ENCODE measurements at regions of chr5 and their contacts with region 1.

Region 1: DNA sequence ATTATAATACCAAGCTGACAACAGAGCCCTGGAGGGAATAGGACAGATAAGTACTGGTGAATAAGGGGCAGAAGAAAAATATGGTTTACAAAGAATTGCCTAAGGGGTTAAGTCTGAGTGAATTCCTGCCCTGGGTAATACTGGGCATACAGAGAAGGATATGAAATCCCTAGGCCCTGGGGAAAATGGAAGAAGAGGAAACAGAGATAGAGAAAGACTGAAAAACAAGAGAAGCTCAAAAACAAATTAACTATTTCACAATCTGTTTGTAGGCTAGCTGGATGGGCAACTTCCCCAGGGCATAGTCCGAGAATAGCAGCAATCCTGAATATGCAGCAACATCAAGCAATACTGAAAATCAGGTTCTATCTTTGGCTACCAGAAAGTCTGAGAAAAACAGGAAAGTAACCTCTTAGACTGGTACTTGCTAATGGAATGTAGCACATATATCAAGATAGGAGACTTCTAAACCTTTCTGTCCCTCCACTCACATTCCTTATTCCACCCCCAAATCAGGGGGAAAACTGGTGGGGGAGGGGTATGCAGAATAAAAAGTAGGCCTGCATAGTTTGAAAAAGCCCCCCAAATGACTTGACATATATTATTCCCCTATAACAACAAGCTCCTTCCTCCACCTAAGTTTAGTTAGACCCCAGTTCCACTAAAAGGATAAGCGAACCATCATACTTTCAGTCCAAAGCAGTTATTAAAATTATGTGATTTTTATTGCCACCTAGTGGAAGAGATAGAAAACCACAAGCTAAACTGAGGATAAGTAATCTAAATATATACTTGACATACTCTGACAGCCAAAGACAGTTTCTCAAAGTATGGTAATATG is 20.6 kb downstream of the SLC38A9 start:
- DNase-seq: no peak
- ATAC-seq: peak; percentile 53
- H3K4me3 Mint-ChIP-seq: no peak overlapping the region
- H3K27ac Mint-ChIP-seq: no peak overlapping the region
- H3K4me1 Mint-ChIP-seq: peaks cover 3% of the 10 kb centered on the region
- H3K27me3 Mint-ChIP-seq: no peaks in the 10 kb centered on the region

Region 2: DNA sequence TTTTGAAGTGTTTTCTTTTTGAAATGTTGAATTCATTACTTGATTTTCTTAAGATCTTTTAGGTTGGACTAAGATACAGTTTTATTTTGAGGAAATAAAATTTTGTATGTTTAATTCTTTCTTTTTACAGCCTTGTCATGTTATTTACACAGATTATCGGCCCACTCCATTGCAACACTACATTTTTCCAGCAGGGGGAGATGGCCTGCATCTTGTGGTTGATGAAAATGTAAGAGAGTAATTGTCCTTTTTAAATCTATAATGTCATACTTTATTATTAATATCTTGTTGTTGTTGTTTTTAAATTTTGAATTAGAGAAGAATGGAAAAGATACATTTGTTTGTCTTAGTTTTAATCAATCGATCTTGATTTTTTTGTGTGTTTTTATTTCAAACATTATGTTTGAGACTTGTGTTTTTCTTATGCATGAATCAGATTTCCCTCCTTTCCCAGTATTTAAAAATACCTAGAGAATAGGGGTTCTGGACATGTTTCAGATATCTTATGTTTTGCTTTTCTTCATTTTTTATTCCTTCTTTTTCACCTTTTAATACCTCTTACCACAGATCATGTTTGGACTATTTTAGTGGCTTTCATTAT is 347.0 kb before region 1 on chr5:
- CTCF ChIA-PET with region 1: interaction called, 23 read pairs
- POLR2A ChIA-PET with region 1: no interaction called
- DNase-seq: peak; percentile 78
- ATAC-seq: no peak
- H3K4me3 Mint-ChIP-seq: no peak overlapping the region
- H3K27ac Mint-ChIP-seq: no peak overlapping the region
- H3K4me1 Mint-ChIP-seq: peaks cover 2% of the 10 kb centered on the region
- H3K27me3 Mint-ChIP-seq: no peaks in the 10 kb centered on the region

Region 3: DNA sequence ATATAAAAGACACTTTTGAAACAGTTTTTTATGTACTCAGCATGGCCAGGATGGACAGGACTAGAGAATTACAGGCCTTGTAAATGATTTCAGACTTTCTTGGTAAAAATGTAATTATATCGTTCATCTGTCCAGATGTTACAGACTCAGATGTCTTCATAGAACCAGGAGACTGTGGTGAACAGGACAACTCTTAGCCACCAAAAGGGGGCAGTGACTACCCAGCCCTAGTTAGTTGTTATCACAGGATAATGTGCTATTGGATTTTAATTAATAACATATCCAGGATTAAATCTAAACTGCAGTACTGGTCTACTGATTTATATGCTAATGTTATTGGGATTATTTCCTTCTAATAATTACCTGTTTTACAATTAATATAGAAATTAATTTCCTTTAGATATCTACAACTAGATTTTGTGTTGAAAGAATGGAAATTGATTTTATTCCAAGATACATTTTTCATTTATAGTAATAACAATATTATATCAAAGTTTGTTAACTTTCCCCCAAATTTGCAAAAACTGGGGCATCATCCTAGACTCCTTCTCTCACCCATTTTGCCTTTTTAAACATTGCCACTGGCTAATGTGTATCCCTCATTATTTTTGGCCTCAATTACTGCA is 284.3 kb before region 1 on chr5:
- CTCF ChIA-PET with region 1: interaction called, 32 read pairs
- POLR2A ChIA-PET with region 1: no interaction called
- DNase-seq: peak; percentile 40
- ATAC-seq: peak; percentile 57
- H3K4me3 Mint-ChIP-seq: no peak overlapping the region
- H3K27ac Mint-ChIP-seq: no peak overlapping the region
- H3K4me1 Mint-ChIP-seq: peaks cover 4% of the 10 kb centered on the region
- H3K27me3 Mint-ChIP-seq: no peaks in the 10 kb centered on the region

Region 4: DNA sequence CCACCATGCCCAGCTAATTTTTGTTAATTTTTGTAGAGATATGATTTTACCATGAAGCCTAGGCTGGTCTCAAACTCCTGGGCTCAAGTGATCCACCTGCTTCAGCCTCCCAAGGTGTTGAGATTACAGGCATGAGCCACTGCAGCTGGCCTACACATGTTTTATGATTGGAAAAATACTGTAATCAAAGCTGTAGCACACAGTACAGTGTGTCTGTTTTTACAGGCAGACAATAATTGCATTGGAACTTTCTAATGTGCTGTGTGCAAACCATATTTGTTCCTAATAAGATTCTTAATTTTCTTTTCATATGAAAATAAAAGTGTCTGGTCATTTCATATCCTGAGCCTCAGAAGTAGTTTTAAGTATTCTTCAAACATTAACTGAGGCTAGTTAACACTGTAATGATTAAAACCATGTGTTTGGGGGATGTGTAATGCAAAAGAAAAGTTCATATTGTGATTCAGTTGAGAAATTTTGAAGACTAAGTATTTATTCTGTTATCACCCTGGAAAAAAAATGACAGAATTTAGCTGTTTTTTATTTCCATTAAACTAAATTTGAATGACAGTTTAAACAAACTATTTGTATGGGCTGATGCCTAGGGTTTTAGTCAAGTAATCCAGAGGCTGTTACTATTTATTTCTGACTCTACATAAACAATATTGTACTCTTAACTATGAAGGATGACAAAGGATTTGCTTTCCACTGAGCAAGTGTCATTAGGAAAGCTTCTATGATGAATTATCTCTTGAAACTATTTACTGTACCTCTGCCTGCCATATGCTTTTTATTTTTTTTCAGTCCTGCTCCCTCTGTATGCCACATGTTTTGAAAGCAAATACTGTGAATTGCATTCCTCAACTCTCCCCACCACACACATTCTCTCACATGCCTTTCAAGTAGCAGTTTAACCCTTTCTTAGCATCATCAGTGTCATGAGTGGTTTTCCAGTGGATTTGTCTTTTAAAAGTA is 272.2 kb before region 1 on chr5:
- CTCF ChIA-PET with region 1: interaction called, 13 read pairs
- POLR2A ChIA-PET with region 1: no interaction called
- DNase-seq: no peak
- ATAC-seq: no peak
- H3K4me3 Mint-ChIP-seq: no peak overlapping the region
- H3K27ac Mint-ChIP-seq: peak overlapping the region; percentile 25
- H3K4me1 Mint-ChIP-seq: peaks cover 25% of the 10 kb centered on the region
- H3K27me3 Mint-ChIP-seq: no peaks in the 10 kb centered on the region

Region 5: GRCh38 chr5:55620009-55620843 is 71.3 kb before region 1 on chr5:
- CTCF ChIA-PET with region 1: no interaction called
- POLR2A ChIA-PET with region 1: no interaction called
- DNase-seq: no peak
- ATAC-seq: no peak
- H3K4me3 Mint-ChIP-seq: no peak overlapping the region
- H3K27ac Mint-ChIP-seq: no peak overlapping the region
- H3K4me1 Mint-ChIP-seq: peaks cover 5% of the 10 kb centered on the region
- H3K27me3 Mint-ChIP-seq: no peaks in the 10 kb centered on the region

Region 6: GRCh38 chr5:55680353-55680752 is 11.1 kb before region 1 on chr5:
- CTCF ChIA-PET with region 1: interaction called, 10 read pairs
- POLR2A ChIA-PET with region 1: no interaction called
- DNase-seq: no peak
- ATAC-seq: no peak
- H3K4me3 Mint-ChIP-seq: no peak overlapping the region
- H3K27ac Mint-ChIP-seq: no peak overlapping the region
- H3K4me1 Mint-ChIP-seq: peaks cover 14% of the 10 kb centered on the region
- H3K27me3 Mint-ChIP-seq: no peaks in the 10 kb centered on the region

Region 7: DNA sequence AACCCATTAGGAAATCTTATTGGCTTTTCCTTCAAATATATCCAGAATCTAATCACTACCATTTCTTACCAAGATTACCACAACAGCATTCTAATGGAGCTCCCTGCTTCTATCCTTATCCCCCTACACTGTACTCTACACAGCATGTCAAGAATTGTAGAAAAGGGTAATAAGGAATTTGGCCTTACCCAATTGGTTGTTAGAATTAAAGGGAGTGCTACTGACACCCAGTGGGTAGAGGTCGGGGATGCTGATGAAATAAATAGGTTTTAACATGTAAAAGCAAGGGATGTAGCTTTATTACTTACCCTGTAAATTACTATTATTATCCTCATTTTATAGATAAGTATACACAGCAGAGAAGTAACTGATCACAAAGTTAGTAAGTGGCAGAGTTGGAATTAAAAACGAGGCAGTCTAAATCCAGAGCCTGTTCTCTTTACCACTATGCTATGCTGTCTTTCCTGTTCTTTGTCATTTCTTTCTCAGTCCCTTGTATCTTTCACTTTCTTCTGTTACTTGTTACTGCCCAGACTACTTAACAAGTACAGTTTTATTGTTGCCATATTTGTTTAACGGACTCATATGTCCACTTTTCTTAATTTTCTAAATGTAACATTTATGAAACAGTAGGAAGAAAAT is 10.1 kb after region 1 on chr5:
- CTCF ChIA-PET with region 1: interaction called, 13 read pairs
- POLR2A ChIA-PET with region 1: no interaction called
- DNase-seq: no peak
- ATAC-seq: no peak
- H3K4me3 Mint-ChIP-seq: no peak overlapping the region
- H3K27ac Mint-ChIP-seq: no peak overlapping the region
- H3K4me1 Mint-ChIP-seq: peaks cover 5% of the 10 kb centered on the region
- H3K27me3 Mint-ChIP-seq: no peaks in the 10 kb centered on the region